Natural killer cell (primary cell): ENCODE measurements at regions of chr11 and their contacts with region 1.

Region 1: DNA sequence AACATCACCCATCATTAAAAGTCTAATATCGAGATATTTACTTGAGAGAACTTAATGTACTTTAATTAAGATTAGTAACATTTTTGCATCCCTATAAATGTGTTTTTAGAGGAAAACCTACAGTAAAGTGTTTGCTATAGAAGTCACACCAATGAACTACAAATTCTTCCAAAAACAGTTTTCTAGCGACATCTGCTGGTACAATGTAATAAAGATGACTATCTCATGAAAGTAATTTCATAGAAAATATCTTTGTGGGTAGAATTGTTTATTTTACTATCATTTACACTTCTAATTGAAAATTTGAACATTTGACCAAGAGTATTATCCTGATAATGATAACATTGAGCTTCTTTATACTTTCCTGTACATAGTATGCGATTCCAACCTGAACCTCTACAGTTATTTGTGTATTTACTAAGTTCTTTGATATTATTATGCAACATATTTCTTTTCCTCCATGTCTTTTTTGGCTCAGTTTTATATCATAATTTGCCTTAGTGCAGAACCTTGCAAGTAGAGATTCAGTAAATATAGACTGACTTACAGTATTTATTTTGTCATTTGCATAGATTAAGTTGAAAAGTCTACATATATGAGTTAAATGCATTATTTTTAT is 252.7 kb downstream of the TMEM135 start:
- DNase-seq: peak in 1 of 2 donors; percentile 71
- ATAC-seq: peak in 1 of 3 donors; percentile 47
- H3K4me3 ChIP-seq: no peak overlapping the region
- H3K4me3 Mint-ChIP-seq: no peak overlapping the region
- H3K27ac ChIP-seq: no peak overlapping the region
- H3K27ac Mint-ChIP-seq: no peak overlapping the region
- H3K4me1 ChIP-seq: no peaks in the 10 kb centered on the region
- H3K4me1 Mint-ChIP-seq: no peaks in the 10 kb centered on the region
- H3K27me3 ChIP-seq: no peaks in the 10 kb centered on the region
- H3K27me3 Mint-ChIP-seq: no peaks in the 10 kb centered on the region
- CTCF ChIP-seq: peak; percentile 84

Region 2: GRCh38 chr11:86869966-86870570 is 420.3 kb before region 1 on chr11:
- intact Hi-C with region 1: loop called (anchors 1 kb)
- DNase-seq: peak; percentile 22 to 57
- ATAC-seq: peak; percentile 68 to 84 (median 72)
- H3K4me3 ChIP-seq: no peak overlapping the region
- H3K4me3 Mint-ChIP-seq: no peak overlapping the region
- H3K27ac ChIP-seq: no peak overlapping the region
- H3K27ac Mint-ChIP-seq: no peak overlapping the region
- H3K4me1 ChIP-seq: no peaks in the 10 kb centered on the region
- H3K4me1 Mint-ChIP-seq: no peaks in the 10 kb centered on the region
- H3K27me3 ChIP-seq: no peaks in the 10 kb centered on the region
- H3K27me3 Mint-ChIP-seq: no peaks in the 10 kb centered on the region
- CTCF ChIP-seq: peak; percentile 75

Region 3: GRCh38 chr11:86938900-86939880 is 351.2 kb before region 1 on chr11:
- intact Hi-C with region 1: loop called (anchors 1 kb)
- DNase-seq: peak in 1 of 2 donors; percentile 66
- ATAC-seq: peak in 2 of 3 donors; percentile 58 to 69
- H3K4me3 ChIP-seq: no peak overlapping the region
- H3K4me3 Mint-ChIP-seq: no peak overlapping the region
- H3K27ac ChIP-seq: no peak overlapping the region
- H3K27ac Mint-ChIP-seq: no peak overlapping the region
- H3K4me1 ChIP-seq: no peaks in the 10 kb centered on the region
- H3K4me1 Mint-ChIP-seq: no peaks in the 10 kb centered on the region
- H3K27me3 ChIP-seq: no peaks in the 10 kb centered on the region
- H3K27me3 Mint-ChIP-seq: peaks cover 6 to 7% of the 10 kb centered on the region in 2 donors
- CTCF ChIP-seq: peak; percentile 76

Region 4: GRCh38 chr11:86978756-86979608 is 311.4 kb before region 1 on chr11:
- intact Hi-C with region 1: loop called (anchors 1 kb)
- DNase-seq: peak in 1 of 2 donors; percentile 64
- ATAC-seq: peak; percentile 64 to 82 (median 74)
- H3K4me3 ChIP-seq: no peak overlapping the region
- H3K4me3 Mint-ChIP-seq: no peak overlapping the region
- H3K27ac ChIP-seq: no peak overlapping the region
- H3K27ac Mint-ChIP-seq: no peak overlapping the region
- H3K4me1 ChIP-seq: no peaks in the 10 kb centered on the region
- H3K4me1 Mint-ChIP-seq: no peaks in the 10 kb centered on the region
- H3K27me3 ChIP-seq: no peaks in the 10 kb centered on the region
- H3K27me3 Mint-ChIP-seq: peaks cover 4 to 7% of the 10 kb centered on the region in 2 donors
- CTCF ChIP-seq: peak; percentile 65

Region 5: GRCh38 chr11:86990515-86990914 is 299.9 kb before region 1 on chr11:
- intact Hi-C with region 1: loop called (anchors 1 kb)
- DNase-seq: no peak
- ATAC-seq: no peak
- H3K4me3 ChIP-seq: no peak overlapping the region
- H3K4me3 Mint-ChIP-seq: no peak overlapping the region
- H3K27ac ChIP-seq: no peak overlapping the region
- H3K27ac Mint-ChIP-seq: no peak overlapping the region
- H3K4me1 ChIP-seq: no peaks in the 10 kb centered on the region
- H3K4me1 Mint-ChIP-seq: no peaks in the 10 kb centered on the region
- H3K27me3 ChIP-seq: no peaks in the 10 kb centered on the region
- H3K27me3 Mint-ChIP-seq: peaks cover 0 to 3% of the 10 kb centered on the region in 2 donors
- CTCF ChIP-seq: no peak

Region 6: DNA sequence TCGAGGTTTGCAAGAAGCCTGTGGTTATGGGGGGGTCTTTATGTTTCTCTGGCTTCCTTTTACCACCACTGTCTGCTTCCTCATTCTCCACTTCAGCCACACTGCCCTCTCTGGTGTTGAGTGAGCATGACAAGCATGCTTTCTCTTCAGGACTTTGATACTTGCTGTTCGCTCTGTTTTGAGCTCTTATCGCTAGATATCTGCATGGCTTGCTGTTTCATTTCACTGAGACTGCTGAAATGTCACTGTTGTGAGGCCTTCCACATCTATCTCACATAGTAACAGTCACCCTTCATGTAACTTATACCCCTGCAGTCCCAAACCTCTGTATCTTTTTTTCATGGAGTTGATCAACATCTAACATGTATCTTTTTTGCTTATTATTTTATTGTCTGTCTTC is 192.8 kb before region 1 on chr11:
- intact Hi-C with region 1: loop called (anchors 10 kb)
- DNase-seq: peak in 1 of 2 donors; percentile 65
- ATAC-seq: peak; percentile 76 to 97 (median 89)
- H3K4me3 ChIP-seq: no peak overlapping the region
- H3K4me3 Mint-ChIP-seq: no peak overlapping the region
- H3K27ac ChIP-seq: no peak overlapping the region
- H3K27ac Mint-ChIP-seq: peak overlapping the region in 1 of 2 donors; percentile 53
- H3K4me1 ChIP-seq: no peaks in the 10 kb centered on the region
- H3K4me1 Mint-ChIP-seq: peaks cover 9 to 10% of the 10 kb centered on the region in 2 donors
- H3K27me3 ChIP-seq: no peaks in the 10 kb centered on the region
- H3K27me3 Mint-ChIP-seq: no peaks in the 10 kb centered on the region
- CTCF ChIP-seq: peak; percentile 77